Activated CD4-positive, alpha-beta T cell treated with anti-CD3 and anti-CD28 coated beads for 36 hours (primary cell): ENCODE measurements at regions of chr9 and their contacts with region 1.

Region 1: GRCh38 chr9:38362852-38363593 is 29.5 kb upstream of the ALDH1B1 start:
- DNase-seq: peak; percentile 44
- ATAC-seq: peak; percentile 75
- H3K4me3 Mint-ChIP-seq: no peak overlapping the region
- H3K27ac Mint-ChIP-seq: peak overlapping the region; percentile 11
- H3K4me1 Mint-ChIP-seq: peaks cover 4% of the 10 kb centered on the region
- H3K27me3 Mint-ChIP-seq: peaks cover 4% of the 10 kb centered on the region

Region 2: GRCh38 chr9:37485389-37486219 is 877.4 kb before region 1 on chr9 and contains the start of gene POLR1E:
- CTCF ChIA-PET with region 1: no interaction called
- POLR2A ChIA-PET with region 1: no interaction called
- intact Hi-C with region 1: no loop called
- DNase-seq: peak; percentile 98
- ATAC-seq: peak; percentile 97
- H3K4me3 Mint-ChIP-seq: peak within 1 kb of the TSS; percentile 94
- H3K27ac Mint-ChIP-seq: peak within 1 kb of the TSS; percentile 93
- H3K4me1 Mint-ChIP-seq: peaks cover 41% of the 10 kb centered on the region
- H3K27me3 Mint-ChIP-seq: peaks cover 7% of the 10 kb centered on the region
- total RNA-seq, gene POLR1E: 67.5 to 69.2 TPM

Region 3: GRCh38 chr9:37753489-37754190 is 609.4 kb before region 1 on chr9 and contains the start of gene TRMT10B:
- CTCF ChIA-PET with region 1: no interaction called
- POLR2A ChIA-PET with region 1: no interaction called
- intact Hi-C with region 1: loop called in 1 of 2 experiments (anchors 5 kb)
- DNase-seq: peak; percentile 88
- ATAC-seq: peak; percentile 94
- H3K4me3 Mint-ChIP-seq: peak within 1 kb of the TSS; percentile 91
- H3K27ac Mint-ChIP-seq: peak within 1 kb of the TSS; percentile 92
- H3K4me1 Mint-ChIP-seq: peaks cover 32% of the 10 kb centered on the region
- H3K27me3 Mint-ChIP-seq: no peaks in the 10 kb centered on the region
- total RNA-seq, gene TRMT10B: 12.3 to 15.6 TPM

Region 4: GRCh38 chr9:38160613-38161215 is 202.3 kb before region 1 on chr9:
- CTCF ChIA-PET with region 1: no interaction called
- POLR2A ChIA-PET with region 1: no interaction called
- intact Hi-C with region 1: loop called in 1 of 2 experiments (anchors 2 kb)
- DNase-seq: peak; percentile 83
- ATAC-seq: peak; percentile 72
- H3K4me3 Mint-ChIP-seq: no peak overlapping the region
- H3K27ac Mint-ChIP-seq: no peak overlapping the region
- H3K4me1 Mint-ChIP-seq: peaks cover 2% of the 10 kb centered on the region
- H3K27me3 Mint-ChIP-seq: no peaks in the 10 kb centered on the region

Region 5: GRCh38 chr9:38271666-38272241 is 91.3 kb before region 1 on chr9:
- CTCF ChIA-PET with region 1: no interaction called
- POLR2A ChIA-PET with region 1: no interaction called
- intact Hi-C with region 1: no loop called
- DNase-seq: no peak
- ATAC-seq: no peak
- H3K4me3 Mint-ChIP-seq: no peak overlapping the region
- H3K27ac Mint-ChIP-seq: no peak overlapping the region
- H3K4me1 Mint-ChIP-seq: no peaks in the 10 kb centered on the region
- H3K27me3 Mint-ChIP-seq: no peaks in the 10 kb centered on the region

Region 6: DNA sequence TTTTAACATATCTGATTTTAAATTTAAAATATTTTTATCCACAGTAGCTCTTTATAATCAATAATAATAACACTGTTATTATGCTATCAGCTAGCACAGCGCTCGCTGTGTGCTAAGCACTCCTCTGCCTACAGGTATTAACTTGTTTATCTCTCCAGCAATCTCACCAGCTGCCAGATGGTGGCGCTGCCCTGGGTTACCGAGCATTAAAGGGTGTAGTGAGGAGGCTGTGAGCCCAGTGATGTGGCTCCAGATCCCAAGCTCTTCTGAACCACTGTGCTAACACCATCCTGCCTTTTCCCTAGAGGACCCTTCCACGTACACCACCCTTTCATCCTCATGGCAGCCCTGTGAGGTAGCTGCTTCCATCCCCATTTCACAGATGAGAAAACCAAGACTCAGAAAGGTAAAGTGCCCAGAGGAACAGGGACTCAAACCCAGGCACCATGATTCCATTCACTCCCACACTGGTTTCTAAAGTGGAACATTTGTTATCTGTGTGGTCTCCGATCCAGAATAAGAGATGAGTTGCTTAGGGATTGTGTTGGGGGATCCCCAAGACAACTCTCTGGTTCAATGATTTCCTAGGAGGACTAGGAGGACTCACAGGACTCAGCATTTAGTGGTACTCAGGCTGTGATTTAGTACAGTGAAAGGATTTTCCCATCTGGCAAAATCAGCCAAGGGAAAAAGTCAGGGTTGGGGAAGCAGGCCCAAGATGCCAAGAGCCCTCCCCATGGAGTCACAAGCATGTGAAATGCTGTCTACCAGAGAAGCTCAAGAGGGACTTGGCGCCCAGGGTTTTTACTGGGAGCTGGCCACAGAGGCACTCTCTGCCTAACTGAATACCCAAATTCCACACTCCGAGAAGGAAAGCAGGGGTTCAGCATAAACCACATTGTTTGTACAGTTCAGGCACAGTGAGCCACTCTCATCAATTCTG is 54.3 kb after region 1 on chr9:
- CTCF ChIA-PET with region 1: no interaction called
- POLR2A ChIA-PET with region 1: no interaction called
- intact Hi-C with region 1: no loop called
- DNase-seq: peak; percentile 77
- ATAC-seq: peak; percentile 78
- H3K4me3 Mint-ChIP-seq: no peak overlapping the region
- H3K27ac Mint-ChIP-seq: no peak overlapping the region
- H3K4me1 Mint-ChIP-seq: no peaks in the 10 kb centered on the region
- H3K27me3 Mint-ChIP-seq: peaks cover 8% of the 10 kb centered on the region